Right ventricle myocardium superior (tissue), 1 donor: ENCODE measurements at regions of chr21 and their contacts with region 1.

Region 1: DNA sequence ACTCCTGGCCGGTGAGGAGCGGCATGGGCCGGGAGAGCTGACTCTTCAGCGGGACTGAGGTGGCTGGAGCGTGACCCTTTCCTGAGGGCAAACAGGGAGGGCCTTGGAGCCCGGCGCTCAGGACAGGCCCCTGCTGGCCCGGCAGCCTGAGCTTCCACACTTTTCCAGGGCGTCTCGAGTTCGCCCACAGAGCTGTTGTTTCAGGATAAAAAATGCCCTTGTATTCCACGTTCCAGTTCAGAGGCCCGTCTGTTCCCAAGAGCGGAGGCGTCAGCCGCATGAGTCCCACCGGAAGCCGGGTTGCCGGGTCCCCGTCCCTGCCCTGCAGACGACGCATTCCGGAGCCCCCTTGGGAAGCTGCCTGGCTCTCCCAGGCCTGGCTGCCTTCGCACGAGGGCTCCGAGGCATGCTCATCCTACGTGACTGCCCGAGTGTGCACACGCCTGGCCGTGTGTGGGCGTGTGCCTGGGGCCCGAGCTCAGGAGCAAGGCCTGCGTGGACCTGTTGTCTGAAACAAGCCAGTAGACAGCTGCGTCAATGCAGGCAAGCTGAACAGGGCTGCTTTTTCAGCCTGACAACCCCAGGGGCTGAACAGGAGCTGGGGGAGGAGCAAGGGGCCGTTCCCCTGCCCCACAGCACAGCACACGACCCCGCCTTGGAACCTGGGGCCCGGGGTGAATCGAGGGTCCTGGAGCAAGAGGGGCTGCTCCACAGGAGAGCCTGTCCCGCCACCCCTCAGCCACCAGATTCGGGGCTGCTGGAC is 125.9 kb downstream of the SIK1 start:
- DNase-seq: peak; percentile 70
- ATAC-seq: peak; percentile 47

Region 2: GRCh38 chr21:43352568-43353281 is 51.7 kb after region 1 on chr21:
- intact Hi-C with region 1: loop called (anchors 5 kb)
- DNase-seq: no peak
- ATAC-seq: no peak